PC-3 (cell line): ENCODE measurements at regions of chr19 and their contacts with region 1.

Region 1: GRCh38 chr19:14496028-14496833 is at the start of gene GIPC1:
- DNase-seq: peak; percentile 99
- ATAC-seq: peak; percentile 85
- H3K4me3 ChIP-seq: peak within 1 kb of the TSS; percentile 93
- H3K27ac ChIP-seq: peak within 1 kb of the TSS; percentile 81
- H3K4me1 ChIP-seq: peaks cover 24% of the 10 kb centered on the region
- H3K27me3 ChIP-seq: no peaks in the 10 kb centered on the region
- CTCF ChIP-seq: no peak
- total RNA-seq, gene GIPC1: 538 and 671 TPM in 2 replicates

Region 2: DNA sequence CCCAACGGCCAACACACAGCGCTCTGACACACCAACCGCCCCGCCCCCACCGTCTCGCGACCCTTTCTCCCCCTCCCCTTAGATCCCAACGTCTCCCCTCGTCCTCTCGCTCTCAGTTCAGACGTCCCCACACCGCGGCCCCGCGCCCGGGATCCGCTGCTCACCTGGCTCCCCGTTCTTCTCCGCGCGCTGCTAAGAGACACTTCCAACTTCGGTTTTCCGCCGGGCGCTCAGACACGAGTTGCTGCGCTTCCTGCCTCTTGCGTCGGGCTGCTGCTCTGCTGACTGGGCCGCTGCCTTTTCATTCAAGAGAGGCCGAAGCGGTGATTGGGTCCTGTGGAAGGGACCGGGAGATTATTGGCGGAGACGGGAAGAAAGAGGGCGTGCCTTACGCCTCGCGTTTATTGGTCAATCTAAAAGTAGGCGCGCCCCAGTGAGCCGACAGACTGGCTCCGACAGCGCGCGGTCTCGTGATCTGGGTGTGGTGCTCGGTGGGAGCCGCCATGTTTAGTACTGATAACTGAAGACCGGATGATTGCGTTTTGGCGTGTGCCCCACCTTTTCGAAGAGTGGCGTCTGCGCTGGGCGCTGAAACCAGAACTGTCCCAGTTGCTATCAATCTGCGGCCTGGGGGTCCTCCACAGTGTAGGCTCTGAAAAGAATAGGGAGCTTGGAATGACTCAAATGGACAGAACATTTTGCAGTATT is 77.0 kb before region 1 on chr19 and contains the start of gene DDX39A:
- CTCF ChIA-PET with region 1: no interaction called
- POLR2A ChIA-PET with region 1: no interaction called
- intact Hi-C with region 1: no loop called
- DNase-seq: peak; percentile 100
- ATAC-seq: peak; percentile 98
- H3K4me3 ChIP-seq: peak within 1 kb of the TSS; percentile 98
- H3K27ac ChIP-seq: peak within 1 kb of the TSS; percentile 83
- H3K4me1 ChIP-seq: peaks cover 23% of the 10 kb centered on the region
- H3K27me3 ChIP-seq: no peaks in the 10 kb centered on the region
- CTCF ChIP-seq: no peak
- total RNA-seq, gene DDX39A: 308 and 311 TPM in 2 replicates

Region 3: GRCh38 chr19:14432791-14433553 is 63.3 kb before region 1 on chr19 and contains the start of gene PKN1:
- CTCF ChIA-PET with region 1: no interaction called
- POLR2A ChIA-PET with region 1: interaction called, 16 read pairs
- intact Hi-C with region 1: no loop called
- DNase-seq: peak; percentile 46
- ATAC-seq: peak; percentile 21
- H3K4me3 ChIP-seq: peak within 1 kb of the TSS; percentile 84
- H3K27ac ChIP-seq: peak within 1 kb of the TSS; percentile 60
- H3K4me1 ChIP-seq: peaks cover 24% of the 10 kb centered on the region
- H3K27me3 ChIP-seq: no peaks in the 10 kb centered on the region
- CTCF ChIP-seq: no peak
- total RNA-seq, gene PKN1: 186 and 238 TPM in 2 replicates

Region 4: GRCh38 chr19:14472202-14472938 is 23.9 kb before region 1 on chr19:
- CTCF ChIA-PET with region 1: no interaction called
- POLR2A ChIA-PET with region 1: no interaction called
- intact Hi-C with region 1: loop called (anchors 1 kb)
- DNase-seq: peak; percentile 72
- ATAC-seq: peak; percentile 7; the same call in 1 of the 2 replicates
- H3K4me3 ChIP-seq: peak overlapping the region; percentile 50
- H3K27ac ChIP-seq: no peak overlapping the region
- H3K4me1 ChIP-seq: peaks cover 29% of the 10 kb centered on the region
- H3K27me3 ChIP-seq: no peaks in the 10 kb centered on the region
- CTCF ChIP-seq: peak; percentile 96

Region 5: DNA sequence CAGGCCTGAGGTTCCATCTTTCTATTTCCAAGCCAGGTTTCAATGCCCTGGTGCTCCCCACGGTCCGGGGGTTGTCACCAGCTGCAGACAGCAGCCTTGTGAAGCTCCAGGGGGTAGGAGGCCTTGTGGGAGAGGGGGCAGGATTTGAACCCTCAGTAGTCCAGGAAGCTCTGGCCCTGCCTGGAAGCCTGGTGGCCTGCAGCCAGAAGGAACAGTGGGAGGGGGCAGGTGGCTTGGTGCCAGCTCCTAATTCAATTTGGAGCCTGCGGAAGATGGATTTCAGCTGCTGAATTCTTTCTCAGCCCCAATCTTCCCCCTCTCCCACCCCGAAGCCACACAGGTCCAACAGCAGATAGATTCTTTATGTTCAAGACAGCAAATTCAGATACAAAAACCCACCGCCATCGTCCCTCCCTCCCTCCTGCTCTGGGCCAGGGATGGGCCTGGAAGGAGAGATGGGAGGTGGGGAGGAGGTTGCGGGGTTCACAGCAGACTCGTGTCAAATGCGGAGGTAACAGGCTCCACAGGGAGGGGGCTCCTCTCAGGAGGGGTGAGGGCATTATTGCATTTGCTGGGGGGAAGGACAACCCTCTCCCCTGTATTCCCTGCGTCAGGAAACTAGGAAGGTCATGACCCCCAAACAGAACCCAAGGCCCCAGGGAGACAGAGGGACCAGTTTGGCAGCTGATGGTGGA is 18.7 kb before region 1 on chr19:
- CTCF ChIA-PET with region 1: interaction called, 11 read pairs
- POLR2A ChIA-PET with region 1: no interaction called
- intact Hi-C with region 1: loop called (anchors 1 kb)
- DNase-seq: no peak
- ATAC-seq: no peak
- H3K4me3 ChIP-seq: no peak overlapping the region
- H3K27ac ChIP-seq: peak overlapping the region; percentile 27; the same call in 1 of the 2 replicates
- H3K4me1 ChIP-seq: peaks cover 27% of the 10 kb centered on the region
- H3K27me3 ChIP-seq: no peaks in the 10 kb centered on the region
- CTCF ChIP-seq: no peak

Region 6: DNA sequence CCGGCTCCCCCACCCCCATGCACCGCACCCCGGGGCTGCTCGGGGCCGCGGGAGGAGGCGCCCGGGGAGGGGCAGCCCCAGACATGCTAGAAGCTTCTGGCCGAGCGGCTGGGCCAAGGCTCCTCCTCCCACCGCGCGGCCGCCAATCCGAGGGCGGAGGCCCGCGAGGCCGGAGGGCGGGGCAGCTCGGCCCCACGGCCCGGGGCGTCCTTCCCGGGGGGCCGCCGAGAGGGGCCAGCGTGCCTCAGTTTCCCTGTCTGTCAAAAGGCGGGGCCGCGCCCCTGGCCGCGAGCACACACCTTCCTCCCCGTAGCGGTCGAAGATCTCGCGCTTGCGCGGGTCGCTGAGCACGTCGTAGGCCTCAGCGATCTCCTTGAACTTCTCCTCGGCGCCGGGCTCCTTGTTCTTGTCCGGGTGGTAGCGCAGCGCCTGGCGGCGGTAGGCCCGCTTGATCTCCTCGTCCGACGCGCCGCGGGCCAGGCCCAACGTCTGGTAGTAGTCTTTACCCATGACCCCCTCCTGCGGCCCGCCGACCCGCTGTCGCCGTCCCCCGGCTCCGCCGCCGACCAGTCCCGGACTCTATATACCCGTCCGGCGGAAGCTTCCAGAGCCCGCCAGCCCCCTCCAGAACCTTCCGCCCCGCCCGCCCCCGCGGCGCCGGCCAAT is 21.7 kb after region 1 on chr19 and contains the start of gene DNAJB1:
- CTCF ChIA-PET with region 1: interaction called, 3 read pairs
- POLR2A ChIA-PET with region 1: interaction called, 15 read pairs
- intact Hi-C with region 1: no loop called
- DNase-seq: peak; percentile 76
- ATAC-seq: peak; percentile 63
- H3K4me3 ChIP-seq: peak within 1 kb of the TSS; percentile 96
- H3K27ac ChIP-seq: peak within 1 kb of the TSS; percentile 93
- H3K4me1 ChIP-seq: peaks cover 43% of the 10 kb centered on the region
- H3K27me3 ChIP-seq: no peaks in the 10 kb centered on the region
- CTCF ChIP-seq: no peak
- total RNA-seq, gene DNAJB1: 167 and 178 TPM in 2 replicates

Region 7: DNA sequence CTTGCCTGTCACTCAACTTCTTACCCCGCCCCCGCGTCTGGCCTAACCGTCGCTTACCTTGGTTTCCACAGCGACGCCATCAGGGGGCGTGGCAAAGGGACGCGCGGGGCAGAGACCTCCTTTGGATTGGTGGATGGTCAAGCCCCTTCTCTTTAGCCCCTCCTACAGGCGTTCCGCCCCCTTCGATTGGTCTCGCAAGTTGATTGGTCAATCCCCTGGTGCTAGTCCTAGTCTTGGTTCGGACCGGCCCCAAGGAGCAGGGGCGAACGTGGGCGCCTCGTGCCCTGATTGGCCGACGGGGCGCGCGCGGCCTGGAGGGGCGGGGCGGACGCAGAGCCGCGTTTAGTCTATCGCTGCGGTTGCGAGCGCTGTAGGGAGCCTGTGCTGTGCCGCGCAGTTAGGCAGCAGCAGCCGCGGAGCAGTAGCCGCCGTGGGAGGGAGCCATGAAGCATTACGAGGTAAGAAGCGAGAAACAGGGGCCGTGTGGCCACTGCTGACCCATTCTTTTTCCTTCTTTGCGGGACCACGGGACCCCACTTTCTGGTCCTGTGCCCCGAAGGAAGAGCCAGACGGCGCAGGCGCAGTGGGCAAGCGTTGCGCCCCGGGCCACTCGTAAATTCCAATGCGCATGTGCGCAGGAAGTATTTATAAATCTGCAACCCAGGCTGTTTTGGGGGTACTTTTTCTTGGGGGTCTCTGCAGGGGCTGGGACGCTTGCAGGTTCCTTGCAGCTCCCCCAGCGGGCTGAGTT is 33.2 kb after region 1 on chr19 and contains the start of gene TECR:
- CTCF ChIA-PET with region 1: interaction called, 3 read pairs
- POLR2A ChIA-PET with region 1: interaction called, 5 read pairs
- intact Hi-C with region 1: loop called (anchors 2 kb)
- DNase-seq: peak; percentile 100
- ATAC-seq: peak; percentile 96
- H3K4me3 ChIP-seq: peak within 1 kb of the TSS; percentile 79
- H3K27ac ChIP-seq: peak within 1 kb of the TSS; percentile 26
- H3K4me1 ChIP-seq: peaks cover 18% of the 10 kb centered on the region
- H3K27me3 ChIP-seq: no peaks in the 10 kb centered on the region
- CTCF ChIP-seq: no peak
- total RNA-seq, gene TECR: 144 and 145 TPM in 2 replicates